ENCODE measurements at regions of chr12 and their contacts with region 1.

Region 1: DNA sequence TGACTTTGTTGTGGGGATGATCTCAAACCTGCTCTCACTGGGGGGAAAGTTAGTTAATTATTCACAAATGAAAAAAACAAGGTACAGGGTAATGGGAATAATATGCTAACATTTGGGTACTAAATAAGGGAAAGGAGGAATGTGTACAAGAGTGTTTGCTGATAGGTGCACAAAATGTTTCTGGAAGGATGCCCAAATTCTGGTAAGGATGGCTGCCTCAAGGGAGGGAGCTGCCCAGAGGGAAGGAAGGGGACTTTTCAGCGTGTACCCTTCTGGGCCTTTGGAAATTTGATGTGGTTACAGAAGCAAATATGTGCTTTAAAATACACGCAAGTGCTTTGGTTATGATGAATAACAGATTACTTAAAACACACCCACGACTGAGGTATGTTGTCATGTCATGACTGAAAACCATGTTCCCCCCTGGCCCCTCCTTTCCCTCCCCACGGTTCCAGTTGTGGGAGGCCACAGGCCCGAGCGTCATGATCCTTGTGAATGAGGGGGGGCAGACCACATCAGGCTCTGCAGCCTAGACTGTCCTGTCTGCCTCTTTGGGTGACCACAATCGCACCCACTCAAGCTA is 43.3 kb upstream of the PLEKHG6 start:
- DNase-seq: no peak
- H3K4me3 ChIP-seq: no peak overlapping the region
- H3K27ac ChIP-seq: no peak overlapping the region
- H3K27me3 ChIP-seq: peaks cover 2% of the 10 kb centered on the region
- CTCF ChIP-seq: no peak

Region 2: DNA sequence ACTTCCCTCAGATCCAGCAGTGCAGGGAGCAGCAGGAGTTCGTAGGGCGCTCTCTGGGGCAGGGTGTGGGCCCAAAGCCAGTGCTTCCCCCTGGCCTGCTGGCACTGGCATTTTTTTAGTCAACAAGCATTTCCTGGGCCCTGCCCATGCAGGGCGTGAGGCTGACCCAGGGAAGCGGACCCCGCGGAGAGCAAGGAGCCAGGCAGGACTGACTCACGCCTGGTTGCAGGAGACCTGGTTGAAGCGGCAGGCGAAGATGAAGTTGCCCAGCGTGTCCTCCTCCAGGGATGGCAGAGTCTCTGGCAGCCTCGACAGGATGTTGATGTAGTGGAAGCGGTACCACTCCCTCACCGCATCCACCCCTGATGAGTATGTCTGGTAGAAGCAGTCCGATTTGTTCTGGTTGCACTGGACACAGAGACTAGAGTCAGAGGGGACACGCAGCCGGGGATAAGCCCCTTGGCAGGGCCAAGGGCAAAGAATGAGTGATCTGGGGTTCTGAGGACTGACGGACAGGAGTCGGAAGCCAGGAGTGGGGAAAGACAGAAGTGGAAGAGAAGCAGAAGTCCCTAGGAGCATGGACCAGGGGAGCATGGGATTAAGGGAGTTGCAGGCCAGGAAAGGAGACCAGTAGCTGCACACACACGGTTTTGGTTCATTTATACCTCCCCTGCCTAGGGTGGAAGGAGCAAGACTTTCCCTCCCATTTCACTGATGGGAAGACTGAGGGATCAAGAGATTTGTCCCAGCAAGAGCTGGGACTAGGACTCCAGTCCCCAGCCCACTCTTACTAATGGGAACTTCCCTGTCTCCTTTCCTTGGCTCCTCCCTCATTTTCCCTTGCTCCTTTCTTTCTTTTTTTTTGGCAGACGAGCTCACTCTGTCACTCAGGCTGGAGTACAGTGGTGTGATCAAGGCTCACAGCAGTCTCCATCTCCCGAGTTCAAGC is 94.9 kb after region 1 on chr12:
- CTCF ChIA-PET with region 1: no interaction called
- POLR2A ChIA-PET with region 1: interaction called, 17 read pairs
- DNase-seq: no peak
- H3K4me3 ChIP-seq: no peak overlapping the region
- H3K27ac ChIP-seq: no peak overlapping the region
- H3K27me3 ChIP-seq: no peaks in the 10 kb centered on the region
- CTCF ChIP-seq: no peak